ENCODE measurements at regions of chr15 and their contacts with region 1.

Region 1: DNA sequence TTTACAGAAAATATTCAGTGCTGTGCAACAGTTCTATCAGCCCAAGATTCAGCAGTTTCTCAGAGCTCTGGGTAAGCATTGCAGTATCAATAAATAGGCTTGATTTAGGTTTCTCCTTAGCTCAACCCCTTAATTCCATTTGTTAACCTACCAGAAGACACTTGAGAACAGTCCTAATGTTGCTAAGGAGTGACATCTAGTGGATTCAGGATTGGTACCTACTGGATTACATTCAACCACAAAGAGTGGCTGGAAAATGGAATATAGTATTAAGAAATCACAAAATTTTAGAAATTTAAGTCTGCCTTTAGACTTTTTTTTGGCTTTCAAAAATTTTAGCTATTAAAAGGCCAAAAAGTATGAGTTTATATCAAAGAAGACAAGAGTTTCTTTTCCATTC is 34.7 kb downstream of the POLG start:
- DNase-seq: no peak
- ATAC-seq: peak; percentile 79
- H3K4me3 ChIP-seq: no peak overlapping the region
- H3K27ac ChIP-seq: no peak overlapping the region
- H3K4me1 ChIP-seq: no peaks in the 10 kb centered on the region
- H3K27me3 ChIP-seq: no peaks in the 10 kb centered on the region
- CTCF ChIP-seq: peak; percentile 39; the same call in 1 of the 2 replicates

Region 2: GRCh38 chr15:89206908-89207331 is 93.0 kb before region 1 on chr15:
- CTCF ChIA-PET with region 1: interaction called, 8 read pairs
- POLR2A ChIA-PET with region 1: no interaction called
- in situ Hi-C with region 1: no loop called
- intact Hi-C with region 1: loop called (anchors 2 kb)
- DNase-seq: peak; percentile 33
- ATAC-seq: peak; percentile 95
- H3K4me3 ChIP-seq: peak overlapping the region; percentile 19 to 35; a peak in 3 of 4 replicates
- H3K27ac ChIP-seq: no peak overlapping the region
- H3K4me1 ChIP-seq: peaks cover 5% of the 10 kb centered on the region; the same call in 1 of the 2 replicates
- H3K27me3 ChIP-seq: no peaks in the 10 kb centered on the region
- CTCF ChIP-seq: peak; percentile 99

Region 3: DNA sequence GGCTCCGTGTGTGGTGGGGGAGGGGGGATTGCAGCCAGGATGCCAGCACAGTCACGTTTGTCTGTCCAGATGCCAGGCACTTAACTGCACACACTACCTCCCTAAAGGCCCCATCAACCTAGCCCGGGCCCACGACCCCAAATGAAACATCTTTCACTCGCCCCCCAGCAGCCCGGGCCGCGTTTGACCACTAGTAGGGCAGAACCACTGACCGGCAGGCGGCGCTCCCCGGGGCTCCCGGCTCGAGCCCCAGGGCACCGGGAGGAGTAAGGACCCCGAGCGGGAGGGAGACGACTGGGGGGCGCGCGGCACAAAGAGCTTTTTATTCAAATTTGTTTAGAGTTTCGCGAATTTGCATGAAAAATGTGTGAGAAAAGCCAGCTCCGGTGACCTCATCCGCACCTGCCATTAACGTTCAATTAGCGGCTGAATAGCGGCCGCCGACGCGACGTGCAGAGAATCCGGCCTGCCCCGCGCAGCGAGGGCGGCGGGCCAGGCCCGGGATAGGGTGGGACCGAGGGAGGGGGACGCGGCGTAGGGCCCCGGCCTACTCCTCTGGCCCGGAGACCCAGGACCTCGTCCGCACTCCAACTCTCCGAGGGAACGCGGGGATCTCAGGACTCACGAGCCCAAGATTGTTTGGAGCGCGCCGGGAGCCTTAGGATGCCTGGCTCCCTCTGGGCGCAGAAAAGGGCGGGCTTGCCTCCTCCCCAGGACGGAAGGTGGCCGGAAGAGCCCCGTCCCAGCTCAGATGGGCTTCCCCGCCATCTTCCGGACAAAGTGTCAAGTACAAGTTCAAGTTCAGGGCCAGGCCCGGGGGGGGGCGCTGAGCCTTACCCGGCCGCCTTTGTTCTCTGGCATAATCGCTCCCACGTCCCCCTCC is 99.6 kb after region 1 on chr15:
- CTCF ChIA-PET with region 1: interaction called, 11 read pairs
- POLR2A ChIA-PET with region 1: no interaction called
- in situ Hi-C with region 1: no loop called
- intact Hi-C with region 1: no loop called
- DNase-seq: no peak
- ATAC-seq: peak; percentile 77
- H3K4me3 ChIP-seq: peak overlapping the region; percentile 46 to 50
- H3K27ac ChIP-seq: peak overlapping the region; percentile 29; the same call in 1 of the 2 replicates
- H3K4me1 ChIP-seq: peaks cover 3% of the 10 kb centered on the region; the same call in 1 of the 2 replicates
- H3K27me3 ChIP-seq: no peaks in the 10 kb centered on the region
- CTCF ChIP-seq: peak; percentile 81

Region 4: DNA sequence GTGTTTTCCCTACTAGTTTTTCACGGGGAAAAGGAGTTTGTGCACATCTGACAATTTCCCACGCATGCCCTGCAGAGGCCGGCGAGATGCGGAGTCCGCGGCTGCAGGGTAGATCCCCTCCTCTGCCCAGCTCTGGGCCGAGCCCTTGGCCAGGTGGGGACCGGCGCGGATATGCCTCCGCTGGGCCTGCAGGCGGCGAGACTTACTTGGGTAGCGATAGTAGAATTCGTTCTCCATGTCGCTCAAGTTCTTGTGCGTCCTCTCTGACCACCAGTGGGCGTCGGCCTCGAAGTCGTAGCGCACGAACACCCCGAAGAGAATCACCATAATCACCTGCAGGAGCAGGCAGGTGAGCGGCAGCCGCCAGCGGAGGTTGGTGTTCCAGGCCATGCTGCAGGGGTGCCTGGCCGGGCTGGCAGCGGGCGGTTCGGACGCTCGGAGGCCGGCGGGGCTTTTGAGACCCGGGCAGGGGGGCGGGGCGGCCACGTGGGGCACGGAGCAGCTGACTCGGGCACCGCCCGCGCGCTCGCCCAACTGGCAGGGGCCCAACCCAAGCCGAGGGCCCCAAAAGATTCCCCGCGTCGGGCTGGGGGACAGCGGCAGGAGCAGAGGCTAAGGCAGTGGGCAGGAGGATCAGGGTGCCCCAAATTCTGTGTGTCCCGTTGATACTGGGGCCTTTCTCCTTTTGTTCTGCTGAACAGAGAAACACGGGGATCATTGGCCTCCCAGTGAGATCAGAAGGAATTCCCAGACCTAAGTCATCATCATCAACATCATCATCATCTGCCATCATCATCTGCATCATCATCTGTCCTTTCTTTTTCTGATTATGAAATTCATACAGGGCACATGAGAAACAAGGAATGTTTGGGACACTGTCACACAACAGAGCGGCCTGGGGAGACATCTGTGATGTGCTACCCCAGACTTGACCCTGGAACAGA is 196.5 kb after region 1 on chr15 and contains the start of gene RHCG:
- CTCF ChIA-PET with region 1: no interaction called
- POLR2A ChIA-PET with region 1: no interaction called
- in situ Hi-C with region 1: no loop called
- intact Hi-C with region 1: no loop called
- DNase-seq: no peak
- ATAC-seq: 0 out of 2 replicates have a peak, but pooled peaks have one; percentile 21
- H3K4me3 ChIP-seq: peak within 1 kb of the TSS; percentile 31 to 41
- H3K27ac ChIP-seq: peak within 1 kb of the TSS; percentile 74
- H3K4me1 ChIP-seq: peaks cover 29% of the 10 kb centered on the region
- H3K27me3 ChIP-seq: no peaks in the 10 kb centered on the region
- CTCF ChIP-seq: peak; percentile 72
- total RNA-seq, gene RHCG: 3.0 TPM